ENCODE measurements at regions of chr15 and their contacts with region 1.

Region 1: DNA sequence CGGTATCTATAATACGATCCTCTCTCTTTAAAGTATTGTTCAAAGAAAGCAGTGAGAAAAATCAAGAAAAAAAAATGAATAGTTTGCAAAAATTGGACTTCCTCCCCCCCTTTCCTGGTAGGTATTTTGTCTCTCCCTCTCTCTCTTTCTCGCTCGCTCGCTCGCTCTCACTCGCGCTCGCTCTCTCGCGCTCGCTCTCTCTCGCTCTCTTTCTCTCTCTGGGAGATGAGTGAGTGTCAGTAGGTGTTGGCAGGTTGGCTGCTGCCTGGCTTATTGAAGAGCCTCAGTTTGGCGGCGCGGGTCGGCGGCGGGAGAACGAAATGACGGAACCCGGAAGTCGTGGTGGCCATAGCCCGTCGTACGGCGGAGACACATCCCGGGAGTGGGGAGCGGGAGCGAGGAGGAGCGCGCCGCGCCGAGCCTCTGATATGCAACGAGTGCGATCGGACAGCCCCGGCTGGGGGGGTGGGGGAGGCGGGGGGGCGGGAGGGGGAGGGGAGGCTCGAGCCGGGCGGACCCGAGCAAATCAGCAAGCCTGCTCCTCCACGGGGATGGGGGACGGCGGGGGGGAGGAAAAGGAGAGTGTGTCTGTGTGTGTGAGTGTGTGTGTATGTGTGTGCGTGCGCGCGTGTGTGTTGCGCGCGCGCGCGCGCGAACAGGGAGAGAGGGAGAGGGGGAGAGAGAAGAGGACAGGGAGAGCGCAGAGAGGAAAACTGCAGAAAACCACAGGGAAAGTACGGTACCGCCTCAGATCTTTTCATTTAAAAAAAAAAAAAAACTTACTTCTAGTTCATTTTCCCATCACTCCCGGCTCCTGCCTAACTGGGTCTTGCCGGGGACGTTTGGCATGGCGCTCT is at the start of gene MEIS2:
- DNase-seq: peak; percentile 98
- H3K4me3 ChIP-seq: peak within 1 kb of the TSS; percentile 83 to 87 (median 84)
- H3K27ac ChIP-seq: peak within 1 kb of the TSS; percentile 95 to 97 (median 96)
- H3K4me1 ChIP-seq: no peaks in the 10 kb centered on the region
- H3K27me3 ChIP-seq: no peaks in the 10 kb centered on the region
- CTCF ChIP-seq: no peak
- EP300 ChIP-seq: peak in 1 of 4 donors; percentile 30
- POLR2A ChIP-seq: peak; percentile 50 to 69
- total RNA-seq, gene MEIS2: 76.0 to 154 (median 85.1) TPM

Region 2: GRCh38 chr15:36784098-36784670 is 316.2 kb before region 1 on chr15:
- intact Hi-C with region 1: loop called (anchors 10 kb)
- DNase-seq: no peak
- H3K4me3 ChIP-seq: peak overlapping the region in 3 of 4 donors; percentile 15 to 27 (median 20)
- H3K27ac ChIP-seq: peak overlapping the region in 2 of 4 donors; percentile 20 to 48
- H3K4me1 ChIP-seq: peaks cover 0 to 43% (median 21%) of the 10 kb centered on the region in 4 donors
- H3K27me3 ChIP-seq: no peaks in the 10 kb centered on the region
- CTCF ChIP-seq: no peak
- EP300 ChIP-seq: no peak
- POLR2A ChIP-seq: no peak

Region 3: GRCh38 chr15:37015035-37015434 is 85.3 kb before region 1 on chr15:
- intact Hi-C with region 1: loop called (anchors 5 kb)
- DNase-seq: no peak
- H3K4me3 ChIP-seq: no peak overlapping the region
- H3K27ac ChIP-seq: peak overlapping the region; percentile 72 to 83 (median 81)
- H3K4me1 ChIP-seq: peaks cover 0 to 69% (median 51%) of the 10 kb centered on the region in 4 donors
- H3K27me3 ChIP-seq: no peaks in the 10 kb centered on the region
- CTCF ChIP-seq: no peak
- EP300 ChIP-seq: no peak
- POLR2A ChIP-seq: no peak

Measured in sigmoid colon (tissue), 7 donors.